ENCODE measurements at regions of chr13 and their contacts with region 1.

Region 1: GRCh38 chr13:39144941-39145533 is 106.8 kb downstream of the NHLRC3 start:
- DNase-seq: peak; percentile 87
- H3K4me3 ChIP-seq: peak overlapping the region; percentile 29
- H3K27ac ChIP-seq: peak overlapping the region; percentile 21
- H3K4me1 ChIP-seq: peaks cover 32% of the 10 kb centered on the region
- H3K27me3 ChIP-seq: no peaks in the 10 kb centered on the region
- CTCF ChIP-seq: peak; percentile 88

Region 2: DNA sequence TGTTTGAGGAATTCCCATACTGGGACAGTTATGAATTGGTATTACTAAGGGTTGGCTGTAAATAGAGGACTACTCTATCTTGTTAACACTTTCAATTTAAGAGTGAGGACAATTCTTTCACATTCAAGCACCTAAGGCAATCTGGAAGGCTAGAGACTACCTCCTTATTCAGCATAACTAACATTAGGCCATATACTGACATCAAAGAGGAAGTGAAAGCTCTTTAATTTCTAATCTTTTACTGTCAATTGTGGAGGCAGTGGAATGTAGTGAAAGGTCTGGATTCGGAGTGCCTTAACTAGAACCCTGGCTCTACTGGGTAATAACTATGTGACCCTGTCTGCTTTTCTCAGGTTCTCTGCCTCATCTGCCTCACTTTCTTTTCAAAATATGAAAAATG is 661.4 kb before region 1 on chr13:
- CTCF ChIA-PET with region 1: no interaction called
- POLR2A ChIA-PET with region 1: no interaction called
- intact Hi-C with region 1: no loop called
- DNase-seq: no peak
- H3K4me3 ChIP-seq: no peak overlapping the region
- H3K27ac ChIP-seq: no peak overlapping the region
- H3K4me1 ChIP-seq: no peaks in the 10 kb centered on the region
- H3K27me3 ChIP-seq: peaks cover 5% of the 10 kb centered on the region
- CTCF ChIP-seq: no peak

Region 3: DNA sequence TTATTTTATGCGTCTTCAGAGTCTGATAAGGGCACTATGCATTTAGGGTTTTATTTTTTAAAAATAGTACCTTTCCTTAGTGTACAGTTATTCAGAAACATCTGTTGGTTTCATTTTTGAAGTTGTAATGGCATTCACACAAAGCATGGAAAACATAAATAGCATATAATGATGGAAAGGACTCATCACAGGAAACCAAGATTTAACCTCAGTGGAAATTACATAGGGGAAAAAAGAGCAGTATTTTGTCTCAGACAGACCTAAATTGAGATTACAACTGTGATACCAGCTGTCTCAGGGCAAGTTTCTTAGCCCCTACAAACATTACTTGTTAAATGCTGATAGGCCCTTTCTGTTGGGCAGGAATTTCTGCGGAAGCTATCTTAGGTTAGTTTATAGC is 49.5 kb before region 1 on chr13:
- CTCF ChIA-PET with region 1: interaction called, 12 read pairs
- POLR2A ChIA-PET with region 1: no interaction called
- intact Hi-C with region 1: no loop called
- DNase-seq: no peak
- H3K4me3 ChIP-seq: no peak overlapping the region
- H3K27ac ChIP-seq: no peak overlapping the region
- H3K4me1 ChIP-seq: peaks cover 4% of the 10 kb centered on the region
- H3K27me3 ChIP-seq: no peaks in the 10 kb centered on the region
- CTCF ChIP-seq: no peak

Region 4: GRCh38 chr13:39263033-39263432 is 118.0 kb after region 1 on chr13:
- CTCF ChIA-PET with region 1: no interaction called
- POLR2A ChIA-PET with region 1: no interaction called
- intact Hi-C with region 1: loop called (anchors 5 kb)
- DNase-seq: peak; percentile 78
- H3K4me3 ChIP-seq: no peak overlapping the region
- H3K27ac ChIP-seq: no peak overlapping the region
- H3K4me1 ChIP-seq: peaks cover 21% of the 10 kb centered on the region
- H3K27me3 ChIP-seq: no peaks in the 10 kb centered on the region
- CTCF ChIP-seq: peak; percentile 84

Region 5: GRCh38 chr13:39364947-39365484 is 220.0 kb after region 1 on chr13:
- CTCF ChIA-PET with region 1: no interaction called
- POLR2A ChIA-PET with region 1: no interaction called
- intact Hi-C with region 1: loop called (anchors 5 kb)
- DNase-seq: no peak
- H3K4me3 ChIP-seq: no peak overlapping the region
- H3K27ac ChIP-seq: peak overlapping the region; percentile 92
- H3K4me1 ChIP-seq: peaks cover 72% of the 10 kb centered on the region
- H3K27me3 ChIP-seq: no peaks in the 10 kb centered on the region
- CTCF ChIP-seq: no peak

Region 6: GRCh38 chr13:39616087-39616694 is 471.2 kb after region 1 on chr13:
- CTCF ChIA-PET with region 1: interaction called, 23 read pairs
- POLR2A ChIA-PET with region 1: no interaction called
- intact Hi-C with region 1: loop called (anchors 1 kb)
- DNase-seq: peak; percentile 89
- H3K4me3 ChIP-seq: no peak overlapping the region
- H3K27ac ChIP-seq: no peak overlapping the region
- H3K4me1 ChIP-seq: peaks cover 31% of the 10 kb centered on the region
- H3K27me3 ChIP-seq: no peaks in the 10 kb centered on the region
- CTCF ChIP-seq: peak; percentile 91

Region 7: DNA sequence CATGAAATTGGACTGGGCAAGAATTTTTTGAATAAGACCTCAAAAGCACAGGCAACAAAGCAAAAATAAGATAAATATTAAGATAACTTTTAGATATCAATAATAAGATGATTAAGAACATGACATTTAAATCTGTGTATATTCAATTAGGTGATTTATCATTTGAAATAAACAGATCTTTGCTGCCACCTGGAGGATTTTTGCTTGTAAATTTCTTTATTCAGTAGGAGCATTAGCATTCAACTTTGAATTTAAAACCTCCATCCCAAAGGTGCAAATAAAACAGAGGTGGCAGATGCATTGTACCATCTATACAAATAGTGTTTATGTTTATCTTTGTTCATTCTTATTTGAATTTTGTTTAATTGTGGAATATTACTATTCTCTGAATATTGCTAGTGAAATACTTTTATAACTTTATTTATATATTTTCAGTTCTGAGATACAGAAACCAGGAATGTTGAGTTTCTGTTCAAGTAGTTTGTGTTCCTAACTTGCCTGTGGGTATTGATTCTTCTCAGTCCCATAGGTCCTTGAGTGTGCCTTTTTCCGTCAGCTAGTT is 531.4 kb after region 1 on chr13:
- CTCF ChIA-PET with region 1: no interaction called
- POLR2A ChIA-PET with region 1: no interaction called
- intact Hi-C with region 1: loop called (anchors 5 kb)
- DNase-seq: peak; percentile 84
- H3K4me3 ChIP-seq: no peak overlapping the region
- H3K27ac ChIP-seq: no peak overlapping the region
- H3K4me1 ChIP-seq: peaks cover 12% of the 10 kb centered on the region
- H3K27me3 ChIP-seq: no peaks in the 10 kb centered on the region
- CTCF ChIP-seq: peak; percentile 66

Region 8: DNA sequence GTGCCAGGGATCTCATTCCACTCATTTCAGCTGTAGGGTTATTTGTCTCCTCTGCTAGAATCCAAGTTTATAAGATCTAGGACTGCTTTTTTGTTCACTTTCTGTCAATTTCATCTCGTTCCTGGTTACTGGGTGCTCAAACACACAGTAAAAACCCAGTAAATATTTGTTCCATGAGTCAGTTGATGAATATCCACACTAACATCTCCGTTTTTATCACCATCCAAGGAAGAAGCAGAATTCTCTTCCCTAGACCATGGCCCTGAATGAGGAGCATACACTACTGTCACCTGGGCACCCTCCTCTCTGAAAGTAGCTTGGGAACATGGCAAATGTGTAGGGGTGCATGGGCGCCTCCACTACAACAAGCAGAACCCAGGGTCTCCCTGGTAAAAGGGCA is 1130.6 kb after region 1 on chr13:
- CTCF ChIA-PET with region 1: no interaction called
- POLR2A ChIA-PET with region 1: no interaction called
- intact Hi-C with region 1: no loop called
- DNase-seq: no peak
- H3K4me3 ChIP-seq: no peak overlapping the region
- H3K27ac ChIP-seq: no peak overlapping the region
- H3K4me1 ChIP-seq: peaks cover 8% of the 10 kb centered on the region
- H3K27me3 ChIP-seq: peaks cover 11% of the 10 kb centered on the region
- CTCF ChIP-seq: no peak

Measured in A673 (cell line).